PC-9 (cell line): ENCODE measurements at regions of chr5 and their contacts with region 1.

Region 1: DNA sequence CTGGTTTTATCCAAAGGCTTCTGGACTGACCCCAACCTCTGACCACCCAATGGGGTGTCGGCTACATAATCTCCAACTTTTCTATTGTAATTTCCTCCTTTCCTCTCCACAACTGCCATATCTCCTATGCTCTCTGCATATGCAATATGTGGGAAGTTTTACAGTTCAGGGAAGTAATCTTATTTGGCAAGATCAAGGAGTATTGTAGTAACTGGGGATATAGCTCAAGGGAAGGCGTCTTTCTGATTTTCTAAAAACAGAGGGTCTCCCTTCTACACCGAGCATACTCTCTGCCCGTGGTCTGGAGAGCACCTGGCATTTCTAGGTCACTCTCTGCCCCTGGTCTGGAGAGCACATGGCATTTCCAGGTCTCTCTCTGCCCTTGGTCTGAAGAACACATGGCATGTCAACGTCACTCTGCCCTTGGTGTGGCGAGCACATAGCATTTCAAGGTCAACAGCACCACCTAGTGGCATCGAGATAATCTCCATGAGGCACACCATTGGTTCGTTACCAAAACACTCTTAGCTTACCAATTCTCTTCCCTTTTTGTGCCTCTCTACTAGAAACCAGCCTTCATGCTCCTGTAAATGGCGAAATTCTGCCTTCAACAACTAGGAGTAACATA is 616.4 kb upstream of the NUDT12 start:
- DNase-seq: peak; percentile 33 to 58
- H3K4me3 ChIP-seq: no peak overlapping the region
- H3K27ac ChIP-seq: no peak overlapping the region
- H3K4me1 ChIP-seq: no peaks in the 10 kb centered on the region
- H3K27me3 ChIP-seq: no peaks in the 10 kb centered on the region
- CTCF ChIP-seq: peak; percentile 88

Region 2: DNA sequence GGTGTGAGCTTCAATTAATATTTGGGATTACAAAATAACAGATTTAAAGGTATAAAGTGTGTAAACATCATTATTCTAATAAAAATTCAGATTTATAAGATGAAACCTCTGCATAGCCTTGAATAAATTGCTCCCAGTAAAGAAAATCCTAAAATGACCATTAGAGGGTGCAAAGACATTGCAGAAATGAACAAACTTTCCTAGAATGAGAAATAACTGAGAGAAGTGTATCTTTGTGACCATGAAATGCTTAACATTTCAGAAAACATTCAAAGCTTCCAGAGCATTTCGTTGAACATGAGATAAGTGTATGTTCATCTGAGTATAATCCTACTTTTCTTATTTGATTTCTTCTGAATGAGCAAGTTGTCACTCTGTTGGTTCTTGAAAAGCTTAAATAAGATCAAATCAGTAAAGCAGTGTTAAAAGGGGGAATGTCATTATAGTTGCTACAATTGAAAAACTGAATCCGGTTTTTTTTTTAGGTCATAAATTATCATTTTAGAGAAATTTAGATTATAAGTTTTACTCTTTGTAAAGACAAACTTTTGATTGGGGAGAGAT is 591.7 kb before region 1 on chr5:
- CTCF ChIA-PET with region 1: no interaction called
- POLR2A ChIA-PET with region 1: no interaction called
- intact Hi-C with region 1: loop called (anchors 1 kb)
- DNase-seq: no peak
- H3K4me3 ChIP-seq: no peak overlapping the region
- H3K27ac ChIP-seq: no peak overlapping the region
- H3K4me1 ChIP-seq: no peaks in the 10 kb centered on the region
- H3K27me3 ChIP-seq: no peaks in the 10 kb centered on the region
- CTCF ChIP-seq: peak; percentile 69

Region 3: DNA sequence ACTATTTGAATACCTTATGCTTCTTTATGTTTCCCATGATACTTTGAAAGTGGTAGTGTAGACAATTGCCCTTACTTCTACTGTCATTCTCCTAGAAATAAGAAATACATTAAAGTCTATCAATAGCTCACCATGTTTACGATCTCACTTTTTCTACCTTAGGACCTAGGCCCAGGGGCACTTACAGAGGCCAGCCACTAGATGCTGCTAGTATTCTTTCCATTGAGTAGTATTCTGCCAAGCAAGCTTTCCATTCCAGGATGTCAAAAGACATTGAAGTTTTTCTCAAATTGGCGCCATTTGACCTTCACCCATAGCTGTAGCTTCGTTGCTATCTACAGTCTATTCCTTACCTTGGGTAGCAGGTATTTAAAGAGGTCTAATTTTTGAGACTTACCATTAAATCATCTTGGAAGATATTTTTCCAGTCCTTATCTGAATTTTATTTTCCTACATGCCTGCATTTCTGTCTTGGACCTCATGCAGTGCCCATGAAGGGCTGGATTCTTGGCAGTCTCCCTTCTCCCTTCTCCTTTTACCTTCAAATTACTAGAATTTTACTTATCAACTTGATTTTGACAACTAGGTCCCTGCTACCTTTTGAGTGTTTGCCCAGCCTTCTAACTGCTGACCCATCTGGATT is 370.4 kb before region 1 on chr5:
- CTCF ChIA-PET with region 1: interaction called, 4 read pairs
- POLR2A ChIA-PET with region 1: no interaction called
- intact Hi-C with region 1: loop called (anchors 1 kb)
- DNase-seq: peak in 1 of 2 experiments; percentile 29
- H3K4me3 ChIP-seq: no peak overlapping the region
- H3K27ac ChIP-seq: no peak overlapping the region
- H3K4me1 ChIP-seq: no peaks in the 10 kb centered on the region
- H3K27me3 ChIP-seq: no peaks in the 10 kb centered on the region
- CTCF ChIP-seq: peak; percentile 93

Region 4: DNA sequence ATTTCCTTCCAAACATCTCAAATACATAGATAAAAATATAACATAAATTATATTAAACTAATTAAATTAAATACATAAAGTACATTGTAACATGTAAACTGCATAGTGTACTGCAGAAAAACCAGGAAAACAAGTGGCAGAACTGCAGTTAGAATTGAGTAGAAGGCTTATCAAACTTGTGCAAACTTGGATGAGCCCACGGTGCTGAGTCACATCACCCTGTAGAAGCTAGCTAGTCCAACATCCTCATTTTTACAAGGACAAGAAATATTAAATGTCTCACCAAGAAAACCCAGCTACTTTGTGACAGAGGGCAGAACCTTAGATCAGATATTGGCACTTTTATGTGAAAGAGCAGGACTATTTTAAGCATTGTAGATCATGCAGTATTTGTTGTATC is 191.6 kb after region 1 on chr5:
- CTCF ChIA-PET with region 1: no interaction called
- POLR2A ChIA-PET with region 1: no interaction called
- intact Hi-C with region 1: no loop called
- DNase-seq: no peak
- H3K4me3 ChIP-seq: no peak overlapping the region
- H3K27ac ChIP-seq: no peak overlapping the region
- H3K4me1 ChIP-seq: no peaks in the 10 kb centered on the region
- H3K27me3 ChIP-seq: no peaks in the 10 kb centered on the region
- CTCF ChIP-seq: no peak

Region 5: DNA sequence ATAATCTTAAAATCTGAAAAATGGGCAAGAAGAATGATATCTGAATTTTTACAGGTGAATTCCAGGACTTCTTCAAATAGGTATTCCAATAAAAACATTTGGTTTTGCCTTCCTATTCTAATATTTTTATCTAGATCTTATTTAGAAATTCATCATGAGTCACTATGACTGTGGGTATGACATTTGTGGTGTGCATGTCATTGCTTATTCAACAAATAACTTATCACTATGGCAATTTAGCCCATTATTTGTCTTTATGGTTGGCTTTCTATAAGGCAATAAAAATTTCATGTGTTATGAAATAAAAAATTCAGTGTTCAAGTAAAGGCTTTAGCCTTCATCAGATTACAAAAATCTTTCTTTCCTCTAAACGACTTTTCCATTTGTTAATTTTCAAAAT is 523.3 kb after region 1 on chr5:
- CTCF ChIA-PET with region 1: no interaction called
- POLR2A ChIA-PET with region 1: no interaction called
- intact Hi-C with region 1: no loop called
- DNase-seq: peak in 1 of 2 experiments; percentile 38
- H3K4me3 ChIP-seq: no peak overlapping the region
- H3K27ac ChIP-seq: no peak overlapping the region
- H3K4me1 ChIP-seq: no peaks in the 10 kb centered on the region
- H3K27me3 ChIP-seq: no peaks in the 10 kb centered on the region
- CTCF ChIP-seq: no peak

Region 6: GRCh38 chr5:105817921-105818320 is 1639.0 kb after region 1 on chr5:
- CTCF ChIA-PET with region 1: no interaction called
- POLR2A ChIA-PET with region 1: no interaction called
- intact Hi-C with region 1: no loop called
- DNase-seq: no peak
- H3K4me3 ChIP-seq: no peak overlapping the region
- H3K27ac ChIP-seq: no peak overlapping the region
- H3K4me1 ChIP-seq: no peaks in the 10 kb centered on the region
- H3K27me3 ChIP-seq: no peaks in the 10 kb centered on the region
- CTCF ChIP-seq: no peak